ENCODE measurements at regions of chr10 and their contacts with region 1.

Region 1: GRCh38 chr10:1048732-1049424 is at the start of gene IDI1:
- DNase-seq: peak; percentile 95 to 99 (median 98)
- H3K4me3 ChIP-seq: peak within 1 kb of the TSS; percentile 64 to 99 (median 91)
- H3K27ac ChIP-seq: peak within 1 kb of the TSS; percentile 94 to 100 (median 100)
- H3K27me3 ChIP-seq: no peaks in the 10 kb centered on the region
- CTCF ChIP-seq: peak in 14 of 56 donors; percentile 5 to 46 (median 18)
- total RNA-seq, gene IDI1: 35.1 to 115 (median 59.2) TPM

Region 2: DNA sequence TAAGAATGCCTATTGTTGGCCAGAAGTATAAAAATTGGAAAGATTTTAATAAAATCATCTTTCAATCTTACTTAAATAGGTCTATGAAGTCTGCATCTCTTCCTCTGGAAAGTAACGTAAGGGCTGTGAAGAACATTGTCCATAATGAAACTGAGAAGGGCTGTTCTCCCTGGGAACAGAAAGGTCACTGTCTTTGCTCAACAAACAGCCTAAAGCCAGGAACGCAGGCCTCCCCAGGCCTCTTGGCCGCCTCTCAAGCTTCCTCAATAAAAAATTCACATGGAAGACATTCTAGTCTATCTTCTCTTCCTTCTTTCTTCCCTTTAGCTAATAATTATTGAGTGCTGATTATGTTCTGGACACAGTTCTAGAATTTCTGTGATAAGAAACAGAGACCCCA is 14.1 kb before region 1 on chr10:
- intact Hi-C with region 1: loop called in 1 of 2 experiments (anchors 2 kb)
- DNase-seq: peak in 1 of 10 donors; percentile 61
- H3K4me3 ChIP-seq: peak overlapping the region in 16 of 59 donors; percentile 2 to 33 (median 16)
- H3K27ac ChIP-seq: peak overlapping the region; percentile 61 to 98 (median 91)
- H3K27me3 ChIP-seq: no peaks in the 10 kb centered on the region
- CTCF ChIP-seq: peak in 1 of 56 donors; percentile 4

Region 3: DNA sequence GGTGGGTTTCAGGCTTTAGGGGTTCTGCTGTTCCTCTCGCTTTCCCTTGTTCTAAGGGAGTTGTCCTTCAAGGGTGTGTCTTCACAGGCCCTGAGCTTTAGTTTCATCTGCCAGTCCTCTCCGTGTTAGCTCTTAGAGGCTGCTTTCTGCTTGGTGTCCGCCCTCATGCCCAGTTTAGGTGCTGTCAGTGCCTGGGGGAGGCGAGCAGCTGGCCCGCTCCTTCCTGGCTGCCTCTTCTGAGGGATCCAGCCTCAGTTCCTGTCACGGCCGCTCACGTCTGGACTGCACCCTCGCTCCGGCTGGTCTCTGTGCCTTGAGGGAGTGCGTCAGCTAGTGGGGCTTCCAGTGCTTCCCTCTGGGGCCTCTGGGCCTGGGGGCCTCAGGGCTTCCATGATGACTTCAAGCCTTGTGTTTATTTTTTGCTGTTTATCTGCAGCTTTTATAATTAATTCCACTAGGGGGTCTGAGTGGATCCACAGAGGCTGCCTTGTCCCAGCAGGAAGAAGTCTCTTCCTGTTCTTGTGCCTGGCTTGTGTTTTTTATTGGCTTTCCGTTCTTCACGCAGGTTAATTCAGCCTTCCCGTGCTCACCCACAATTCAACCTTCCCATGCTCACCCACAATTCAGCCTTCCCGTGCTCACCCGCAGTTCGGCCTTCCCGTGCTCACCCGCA is 40.3 kb after region 1 on chr10:
- intact Hi-C with region 1: no loop called
- DNase-seq: peak in 5 of 10 donors; percentile 44 to 74 (median 55)
- H3K4me3 ChIP-seq: no peak overlapping the region
- H3K27ac ChIP-seq: peak overlapping the region in 29 of 59 donors; percentile 0 to 72 (median 37)
- H3K27me3 ChIP-seq: no peaks in the 10 kb centered on the region
- CTCF ChIP-seq: peak in 1 of 56 donors; percentile 13

Measured in dorsolateral prefrontal cortex (tissue), 120 donors.